Thyroid gland (tissue), 4 donors: ENCODE measurements at regions of chr3 and their contacts with region 1.

Region 1: GRCh38 chr3:52429779-52430407 is 15.0 kb downstream of the SEMA3G start:
- DNase-seq: no peak
- H3K4me3 ChIP-seq: no peak overlapping the region
- H3K27ac ChIP-seq: no peak overlapping the region
- H3K4me1 ChIP-seq: peaks cover 7 to 23% of the 10 kb centered on the region in 2 donors
- H3K27me3 ChIP-seq: no peaks in the 10 kb centered on the region
- CTCF ChIP-seq: no peak
- POLR2A ChIP-seq: no peak

Region 2: GRCh38 chr3:52446631-52447511 is 17.0 kb after region 1 on chr3:
- intact Hi-C with region 1: loop called (anchors 2 kb)
- DNase-seq: peak; percentile 43 to 46
- H3K4me3 ChIP-seq: no peak overlapping the region
- H3K27ac ChIP-seq: no peak overlapping the region
- H3K4me1 ChIP-seq: peaks cover 12 to 29% of the 10 kb centered on the region in 2 donors
- H3K27me3 ChIP-seq: no peaks in the 10 kb centered on the region
- CTCF ChIP-seq: peak; percentile 96 to 100 (median 99)
- POLR2A ChIP-seq: no peak